K562 (cell line): ENCODE measurements at regions of chr9 and their contacts with region 1.

Region 1: GRCh38 chr9:120842690-120843499 is at the start of gene PSMD5:
- DNase-seq: peak; percentile 100
- ATAC-seq: peak; percentile 95
- H3K4me3 ChIP-seq: peak within 1 kb of the TSS; percentile 54
- H3K27ac ChIP-seq: peak within 1 kb of the TSS; percentile 95
- H3K4me1 ChIP-seq: peaks cover 37 to 58% of the 10 kb centered on the region in 2 experiments
- H3K27me3 ChIP-seq: no peaks in the 10 kb centered on the region
- CTCF ChIP-seq: peak in 1 of 3 experiments; percentile 59; a peak in 2 of 6 replicates
- EP300 ChIP-seq: peak; percentile 59; the same call in 1 of the 2 replicates
- POLR2A ChIP-seq: no peak
- RAD21 ChIP-seq: no peak
- polyA plus RNA-seq, gene PSMD5: 46.4 to 60.9 TPM

Region 2: DNA sequence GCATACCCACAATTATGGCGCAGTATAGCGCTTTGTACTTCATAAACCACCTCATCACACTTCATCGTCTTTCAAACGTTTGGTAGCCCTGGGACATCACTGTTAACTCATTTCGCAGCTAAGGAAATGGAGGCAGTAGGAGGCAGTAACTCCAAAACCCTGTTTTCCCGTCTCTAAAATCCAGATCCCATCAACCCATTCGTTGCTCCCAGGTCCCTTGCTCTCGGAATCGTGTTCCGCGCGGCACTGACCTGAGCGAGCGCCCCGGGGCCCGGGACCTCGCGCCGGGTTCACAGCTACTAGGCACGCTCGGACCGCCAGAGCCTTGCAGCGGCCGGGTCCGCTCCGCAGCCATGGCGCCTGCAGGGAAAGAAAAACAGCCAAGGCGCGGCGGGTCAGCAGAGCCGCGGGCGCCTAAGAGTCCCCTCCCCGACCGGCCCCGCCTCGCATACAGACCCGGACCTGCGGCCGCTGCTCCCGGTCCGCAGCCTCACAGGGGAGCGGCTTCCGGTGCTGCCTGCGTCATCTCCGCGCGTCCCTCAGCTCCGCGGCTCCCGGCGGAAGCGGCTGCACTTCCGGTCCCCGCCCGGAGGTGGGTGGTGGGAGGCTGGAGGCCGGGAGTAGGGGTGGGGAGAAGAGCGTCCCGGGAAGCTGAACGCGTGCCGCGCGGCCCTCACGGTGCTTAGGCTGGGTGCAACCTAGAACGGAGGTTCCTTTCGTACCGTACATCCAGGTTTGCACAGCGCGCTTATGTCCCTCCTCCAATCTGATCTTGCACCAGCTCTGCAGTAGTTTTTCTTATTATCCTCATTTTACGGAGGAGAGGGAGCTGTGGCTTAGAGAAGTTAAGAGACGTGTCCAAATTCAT is 49.8 kb before region 1 on chr9 and contains the start of gene FBXW2:
- CTCF ChIA-PET with region 1: no interaction called
- POLR2A ChIA-PET with region 1: interaction called, 16 read pairs
- in situ Hi-C with region 1: no loop called
- intact Hi-C with region 1: loop called (anchors 1 kb)
- DNase-seq: peak; percentile 98 to 99 (median 98)
- ATAC-seq: peak; percentile 95
- H3K4me3 ChIP-seq: peak within 1 kb of the TSS; percentile 82
- H3K27ac ChIP-seq: peak within 1 kb of the TSS; percentile 85
- H3K4me1 ChIP-seq: peaks cover 8 to 26% of the 10 kb centered on the region in 2 experiments; a peak in 4 of 5 replicates
- H3K27me3 ChIP-seq: no peaks in the 10 kb centered on the region
- CTCF ChIP-seq: peak in 1 of 3 experiments; percentile 5; a peak in 1 of 6 replicates
- EP300 ChIP-seq: 0 out of 2 replicates have a peak, but pooled peaks have one; percentile 56
- POLR2A ChIP-seq: peak; percentile 99
- RAD21 ChIP-seq: peak in 1 of 2 experiments; percentile 25; a peak in 2 of 4 replicates
- polyA plus RNA-seq, gene FBXW2: 2.5 to 2.9 TPM

Region 3: GRCh38 chr9:120830151-120830550 is 12.7 kb before region 1 on chr9:
- CTCF ChIA-PET with region 1: no interaction called
- POLR2A ChIA-PET with region 1: interaction called, 19 read pairs
- in situ Hi-C with region 1: no loop called
- intact Hi-C with region 1: no loop called
- DNase-seq: peak in 1 of 4 experiments; percentile 15
- ATAC-seq: no peak
- H3K4me3 ChIP-seq: no peak overlapping the region
- H3K27ac ChIP-seq: no peak overlapping the region
- H3K4me1 ChIP-seq: no peaks in the 10 kb centered on the region
- H3K27me3 ChIP-seq: no peaks in the 10 kb centered on the region
- CTCF ChIP-seq: no peak
- EP300 ChIP-seq: no peak
- POLR2A ChIP-seq: no peak
- RAD21 ChIP-seq: no peak

Region 4: DNA sequence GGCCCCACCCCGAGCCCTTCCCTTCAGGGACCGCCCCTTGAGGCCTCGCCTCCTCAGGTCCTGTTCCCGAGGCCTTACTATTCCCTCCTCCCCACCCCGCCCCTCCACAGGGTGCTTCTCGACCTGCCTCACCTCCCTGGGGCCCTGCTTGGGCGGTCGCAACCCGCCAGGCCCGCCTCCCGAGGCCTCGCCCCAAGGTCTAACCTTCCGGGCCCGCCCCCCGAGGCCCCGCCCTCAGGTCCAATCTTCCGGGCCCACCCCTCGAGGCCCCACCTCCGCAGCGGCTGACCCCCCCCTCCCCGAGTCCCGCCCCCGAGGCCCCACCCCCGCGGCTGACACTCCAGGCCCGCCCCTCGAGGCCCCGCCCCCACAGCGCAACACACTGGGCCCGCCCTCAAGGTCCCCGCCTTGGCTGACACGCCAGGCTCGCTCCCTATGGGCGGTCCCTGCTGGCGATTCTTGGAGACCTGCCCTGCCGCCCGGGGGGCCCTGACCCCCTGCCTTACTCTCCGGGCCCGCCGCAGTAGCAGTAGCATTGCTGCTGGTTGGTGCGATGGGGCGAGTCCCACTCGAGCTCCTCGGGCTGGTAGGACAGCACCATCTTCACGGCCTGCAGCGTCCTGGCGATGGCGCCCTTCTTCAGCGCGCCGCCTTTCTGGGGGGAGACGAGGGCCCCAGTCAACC is 25.9 kb after region 1 on chr9:
- CTCF ChIA-PET with region 1: no interaction called
- POLR2A ChIA-PET with region 1: interaction called, 47 read pairs
- in situ Hi-C with region 1: no loop called
- intact Hi-C with region 1: loop called (anchors 1 kb)
- DNase-seq: peak; percentile 100
- ATAC-seq: peak; percentile 98
- H3K4me3 ChIP-seq: peak overlapping the region; percentile 41
- H3K27ac ChIP-seq: peak overlapping the region; percentile 76
- H3K4me1 ChIP-seq: peaks cover 13 to 27% of the 10 kb centered on the region in 2 experiments
- H3K27me3 ChIP-seq: no peaks in the 10 kb centered on the region
- CTCF ChIP-seq: peak in 1 of 3 experiments; percentile 91; a peak in 2 of 6 replicates
- EP300 ChIP-seq: no peak
- POLR2A ChIP-seq: no peak
- RAD21 ChIP-seq: peak in 1 of 2 experiments; percentile 94; a peak in 2 of 4 replicates

Region 5: DNA sequence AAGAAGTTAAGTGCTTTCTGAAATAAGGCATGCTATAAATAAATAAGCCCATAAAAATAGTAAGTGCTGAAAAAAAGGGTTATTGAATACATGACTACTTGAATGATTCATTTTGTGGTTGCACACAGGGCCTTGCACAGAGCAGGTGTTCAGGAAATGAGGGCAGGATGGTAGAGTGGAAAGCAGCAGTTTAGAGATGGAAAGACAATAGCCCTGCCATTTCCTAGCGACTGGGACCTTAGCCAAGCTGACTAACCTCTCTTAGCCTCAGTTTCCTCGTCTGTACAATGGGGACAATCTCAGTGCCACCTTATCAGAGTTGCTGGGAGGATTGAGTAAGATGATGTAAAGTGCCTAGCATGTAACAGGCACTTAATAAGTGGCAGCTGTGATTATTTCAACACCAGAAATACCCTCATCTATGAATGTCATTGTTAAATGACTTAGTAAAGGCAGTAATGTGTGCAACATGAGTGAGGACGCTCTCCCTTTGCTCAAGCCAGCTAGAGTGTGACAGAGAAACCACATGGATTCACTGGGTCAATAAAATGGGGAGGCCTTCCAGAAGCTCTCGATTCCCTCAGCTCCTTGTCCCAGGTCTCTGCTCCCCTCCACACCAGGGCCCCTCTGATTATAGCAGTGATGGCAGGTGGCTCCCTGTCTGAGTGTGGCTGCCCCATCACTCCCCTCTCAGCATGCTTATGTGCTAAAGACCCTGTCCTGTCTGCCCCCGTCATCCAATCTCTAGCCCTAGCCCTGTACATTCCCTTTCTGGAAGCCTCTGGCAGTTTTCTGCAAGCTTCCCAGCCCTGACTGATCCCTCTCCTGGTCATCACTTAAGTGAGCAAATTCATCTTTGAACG is 50.1 kb after region 1 on chr9:
- CTCF ChIA-PET with region 1: no interaction called
- POLR2A ChIA-PET with region 1: interaction called, 11 read pairs
- in situ Hi-C with region 1: no loop called
- intact Hi-C with region 1: loop called (anchors 1 kb)
- DNase-seq: peak in 3 of 4 experiments; percentile 24 to 33 (median 31)
- ATAC-seq: no peak
- H3K4me3 ChIP-seq: no peak overlapping the region
- H3K27ac ChIP-seq: peak overlapping the region; percentile 10; the same call in 1 of the 3 replicates
- H3K4me1 ChIP-seq: peaks cover 41 to 57% of the 10 kb centered on the region in 2 experiments
- H3K27me3 ChIP-seq: no peaks in the 10 kb centered on the region
- CTCF ChIP-seq: no peak
- EP300 ChIP-seq: no peak
- POLR2A ChIP-seq: no peak
- RAD21 ChIP-seq: no peak

Region 6: DNA sequence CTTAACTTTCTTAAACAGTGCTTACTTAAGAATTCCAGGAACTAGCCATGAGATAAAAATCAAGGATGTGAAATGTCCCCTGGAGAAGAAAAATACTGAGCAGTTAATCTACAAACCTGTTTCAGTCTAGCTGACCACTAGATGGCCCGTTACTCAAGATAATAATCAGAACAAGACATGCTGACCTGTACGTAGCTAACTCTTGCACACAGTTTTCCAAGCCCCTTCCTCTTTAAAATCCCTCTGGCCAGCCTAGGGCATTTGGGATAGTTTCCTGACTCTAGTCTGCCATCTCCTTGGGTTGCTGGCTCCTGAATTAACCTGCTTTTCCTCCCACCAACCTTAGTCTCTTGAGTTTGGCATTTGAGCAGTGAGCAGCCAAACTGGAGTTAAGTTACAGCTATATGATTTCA is 142.9 kb after region 1 on chr9:
- CTCF ChIA-PET with region 1: no interaction called
- POLR2A ChIA-PET with region 1: no interaction called
- in situ Hi-C with region 1: no loop called
- intact Hi-C with region 1: loop called (anchors 5 kb)
- DNase-seq: peak; percentile 25 to 68 (median 28)
- ATAC-seq: peak; percentile 80
- H3K4me3 ChIP-seq: no peak overlapping the region
- H3K27ac ChIP-seq: no peak overlapping the region
- H3K4me1 ChIP-seq: peaks cover 0 to 13% of the 10 kb centered on the region in 2 experiments; a peak in 3 of 5 replicates
- H3K27me3 ChIP-seq: no peaks in the 10 kb centered on the region
- CTCF ChIP-seq: peak; percentile 41 to 79 (median 65); a peak in 5 of 6 replicates
- EP300 ChIP-seq: peak; percentile 32; the same call in 1 of the 2 replicates
- POLR2A ChIP-seq: no peak
- RAD21 ChIP-seq: peak; percentile 72 to 75